CD4-positive, alpha-beta T cell (primary cell): ENCODE measurements at regions of chr14 and their contacts with region 1.

Region 1: DNA sequence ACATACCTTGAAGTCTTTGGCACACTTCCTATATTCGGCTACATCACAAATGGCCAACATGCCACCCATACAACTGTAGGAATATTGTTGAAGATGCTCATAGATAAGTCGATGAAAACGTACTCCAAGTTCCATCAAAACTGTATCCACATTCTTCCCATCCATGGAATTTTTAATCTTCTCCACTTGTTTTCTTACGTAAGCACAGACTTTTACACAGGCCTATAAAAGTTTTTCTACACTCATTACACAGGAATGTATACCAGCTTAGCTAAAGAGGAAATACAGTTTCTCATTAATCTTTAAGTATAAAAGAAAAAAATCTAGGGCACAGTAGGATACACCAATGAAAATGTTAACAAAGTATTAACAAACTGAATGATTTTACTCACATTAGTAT is 59.1 kb downstream of the EXOC5 start:
- DNase-seq: no peak
- ATAC-seq: no peak
- H3K4me3 ChIP-seq: no peak overlapping the region
- H3K4me3 Mint-ChIP-seq: no peak overlapping the region
- H3K27ac ChIP-seq: no peak overlapping the region
- H3K27ac Mint-ChIP-seq: no peak overlapping the region
- H3K4me1 ChIP-seq: no peaks in the 10 kb centered on the region
- H3K4me1 Mint-ChIP-seq: peaks cover 5% of the 10 kb centered on the region
- H3K27me3 ChIP-seq: no peaks in the 10 kb centered on the region
- H3K27me3 Mint-ChIP-seq: no peaks in the 10 kb centered on the region
- CTCF ChIP-seq: no peak

Region 2: DNA sequence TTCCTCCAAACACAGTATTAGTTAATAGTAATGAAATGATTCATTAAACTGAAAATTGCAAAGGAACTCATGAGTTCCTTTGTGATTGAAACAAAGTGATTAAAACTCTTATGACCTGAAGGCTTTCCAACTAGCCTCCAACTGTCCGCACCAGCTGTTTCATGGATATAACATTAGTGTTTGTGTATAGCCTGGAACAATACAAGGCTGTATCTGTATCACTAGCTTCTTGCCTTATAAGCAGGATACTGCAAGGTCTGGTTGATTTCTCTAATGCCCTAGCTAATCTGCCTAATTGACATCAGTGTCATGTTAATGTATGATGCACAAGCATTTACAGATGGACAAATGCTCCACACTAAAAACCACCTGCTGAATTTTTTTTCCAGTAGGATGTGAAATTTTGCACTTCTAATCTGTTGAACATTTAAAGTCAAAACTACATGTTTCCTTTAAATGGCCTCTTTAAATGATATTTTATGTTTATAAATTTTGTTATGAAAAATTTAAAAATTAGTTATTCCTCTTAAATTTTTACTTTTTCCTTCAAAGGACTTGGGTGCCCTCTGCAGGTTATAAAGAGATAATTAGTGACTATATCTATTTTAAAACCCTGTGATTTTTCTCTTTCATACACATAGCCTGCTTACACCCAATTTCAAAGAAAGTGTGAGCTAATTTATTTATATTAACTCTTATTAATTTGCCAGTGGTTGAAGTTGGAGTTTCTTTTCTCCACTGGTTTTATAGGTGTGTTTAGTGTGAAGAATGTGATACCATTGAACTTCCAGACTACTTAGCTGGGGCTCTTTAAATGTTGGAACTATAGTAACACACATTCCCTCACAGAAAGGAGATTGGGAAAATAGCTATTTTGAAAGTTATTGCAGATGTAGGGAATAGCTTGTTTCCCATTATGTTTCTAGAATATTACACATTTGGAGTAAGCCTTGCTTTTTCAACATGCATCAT is 84.6 kb after region 1 on chr14:
- CTCF ChIA-PET with region 1: interaction called, 3 read pairs
- POLR2A ChIA-PET with region 1: no interaction called
- intact Hi-C with region 1: loop called in 1 of 2 experiments (anchors 5 kb)
- DNase-seq: peak in 3 of 14 experiments; percentile 13 to 18 (median 15)
- ATAC-seq: no peak
- H3K4me3 ChIP-seq: no peak overlapping the region
- H3K4me3 Mint-ChIP-seq: no peak overlapping the region
- H3K27ac ChIP-seq: no peak overlapping the region
- H3K27ac Mint-ChIP-seq: no peak overlapping the region
- H3K4me1 ChIP-seq: no peaks in the 10 kb centered on the region
- H3K4me1 Mint-ChIP-seq: no peaks in the 10 kb centered on the region
- H3K27me3 ChIP-seq: no peaks in the 10 kb centered on the region
- H3K27me3 Mint-ChIP-seq: no peaks in the 10 kb centered on the region
- CTCF ChIP-seq: peak; percentile 47